Activated B cell treated with CpG ODN at 0.5 μM for 24 hours (primary cell): ENCODE measurements at regions of chr11 and their contacts with region 1.

Region 1: DNA sequence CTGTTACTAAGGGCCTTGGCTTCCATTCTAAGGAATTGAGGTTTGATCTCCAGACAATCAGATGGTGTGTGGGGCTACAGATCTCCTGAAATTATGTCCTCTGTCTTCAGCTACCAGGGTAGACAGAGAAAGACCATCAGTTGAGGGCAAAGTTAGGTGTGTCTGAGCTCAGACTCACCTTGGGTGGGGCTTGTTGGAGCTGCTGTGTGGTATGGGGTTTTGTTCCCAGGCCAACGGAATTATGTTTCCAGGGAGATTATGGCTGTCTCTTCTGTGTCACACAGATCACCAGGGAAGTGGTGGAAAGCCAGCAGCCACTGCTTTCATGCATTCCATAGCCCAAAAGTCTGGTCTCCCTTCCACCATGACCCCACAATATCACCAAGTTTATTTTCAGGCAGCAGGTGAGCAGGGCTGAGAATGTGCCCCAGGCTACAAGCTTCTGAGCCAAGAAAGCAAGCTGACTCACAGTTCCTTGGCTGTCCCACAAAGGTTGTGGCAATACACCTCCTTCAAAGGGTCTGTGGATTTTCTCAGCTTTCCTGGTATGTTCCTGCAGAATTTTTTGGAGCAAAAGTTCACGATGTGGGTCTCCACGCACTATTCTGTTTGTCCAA is 714.9 kb downstream of the LUZP2 start:
- DNase-seq: no peak
- ATAC-seq: no peak
- H3K4me3 Mint-ChIP-seq: no peak overlapping the region
- H3K27ac Mint-ChIP-seq: no peak overlapping the region
- H3K4me1 Mint-ChIP-seq: no peaks in the 10 kb centered on the region
- H3K27me3 Mint-ChIP-seq: no peaks in the 10 kb centered on the region
- CTCF ChIP-seq: no peak

Region 2: DNA sequence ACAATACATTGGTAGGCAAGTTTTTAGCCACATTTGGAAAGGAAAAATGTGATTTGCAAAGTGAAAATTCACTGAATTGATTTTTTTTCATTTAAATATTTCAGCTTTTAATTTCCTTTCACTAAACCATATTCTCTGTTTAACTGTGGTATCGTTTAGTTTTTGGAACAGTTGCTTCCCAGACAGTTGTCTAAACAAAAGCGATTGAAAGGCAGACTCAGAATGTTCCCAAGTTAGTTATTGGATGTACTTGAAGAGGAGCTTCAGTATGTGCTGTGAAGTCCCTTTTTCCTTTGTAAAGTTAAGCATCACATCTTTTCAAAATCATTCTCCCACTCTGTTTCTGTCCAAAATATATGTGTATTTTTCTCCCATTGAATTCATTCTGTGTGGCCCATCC is 1338.3 kb before region 1 on chr11:
- CTCF ChIA-PET with region 1: no interaction called
- POLR2A ChIA-PET with region 1: no interaction called
- intact Hi-C with region 1: loop called (anchors 5 kb)
- DNase-seq: no peak
- ATAC-seq: no peak
- H3K4me3 Mint-ChIP-seq: no peak overlapping the region
- H3K27ac Mint-ChIP-seq: no peak overlapping the region
- H3K4me1 Mint-ChIP-seq: no peaks in the 10 kb centered on the region
- H3K27me3 Mint-ChIP-seq: no peaks in the 10 kb centered on the region
- CTCF ChIP-seq: no peak

Region 3: GRCh38 chr11:25163421-25163820 is 48.3 kb before region 1 on chr11:
- CTCF ChIA-PET with region 1: no interaction called
- POLR2A ChIA-PET with region 1: no interaction called
- intact Hi-C with region 1: no loop called
- DNase-seq: no peak
- ATAC-seq: no peak
- H3K4me3 Mint-ChIP-seq: no peak overlapping the region
- H3K27ac Mint-ChIP-seq: no peak overlapping the region
- H3K4me1 Mint-ChIP-seq: no peaks in the 10 kb centered on the region
- H3K27me3 Mint-ChIP-seq: no peaks in the 10 kb centered on the region
- CTCF ChIP-seq: no peak